ENCODE measurements at regions of chr21 and their contacts with region 1.

Region 1: GRCh38 chr21:39004634-39005501 is 178.4 kb downstream of the PSMG1 start:
- DNase-seq: no peak
- H3K4me3 ChIP-seq: no peak overlapping the region
- H3K27ac ChIP-seq: no peak overlapping the region
- H3K4me1 ChIP-seq: peaks cover 10% of the 10 kb centered on the region
- H3K27me3 ChIP-seq: no peaks in the 10 kb centered on the region
- CTCF ChIP-seq: no peak

Region 2: DNA sequence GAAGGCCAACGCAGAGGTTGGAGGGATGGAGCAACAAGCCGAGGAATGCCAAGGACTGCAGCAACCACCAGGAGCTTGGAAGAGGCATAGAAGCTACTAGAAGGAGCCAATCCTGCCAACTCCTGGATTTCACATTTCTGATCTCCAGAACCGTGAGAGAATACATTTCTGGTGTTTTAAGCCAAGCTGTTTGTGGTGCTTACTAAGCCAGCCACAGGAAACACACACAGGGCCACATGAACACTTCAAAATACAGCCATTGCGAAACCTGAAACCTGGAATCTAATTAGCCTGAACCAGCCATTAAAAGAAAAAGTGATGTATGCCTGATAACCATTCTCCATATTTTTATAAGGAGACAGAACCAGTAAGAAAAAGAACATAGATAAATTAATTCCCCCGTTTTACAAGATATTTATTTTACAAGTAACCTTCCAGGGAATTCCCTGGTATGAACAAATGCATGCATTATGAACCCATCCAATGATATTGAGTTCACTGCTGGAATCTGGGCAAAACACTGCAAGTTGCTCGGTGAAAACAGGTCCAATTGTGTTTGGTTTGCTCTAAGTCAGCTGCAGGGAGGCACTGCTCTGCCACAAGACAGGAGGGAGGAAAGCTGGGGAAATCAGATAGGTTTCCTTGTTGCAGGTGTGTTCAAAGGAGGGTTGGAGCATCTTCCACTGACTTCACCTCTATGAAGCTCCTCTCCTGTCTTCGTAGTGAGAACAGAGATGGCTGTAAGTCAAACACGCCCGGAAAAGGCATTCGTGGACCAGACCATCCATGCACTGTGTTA is 129.0 kb before region 1 on chr21:
- CTCF ChIA-PET with region 1: no interaction called
- dilution Hi-C with region 1: no loop called
- in situ Hi-C with region 1: no loop called
- intact Hi-C with region 1: no loop called
- DNase-seq: peak; percentile 72
- H3K4me3 ChIP-seq: no peak overlapping the region
- H3K27ac ChIP-seq: no peak overlapping the region
- H3K4me1 ChIP-seq: peaks cover 4% of the 10 kb centered on the region
- H3K27me3 ChIP-seq: no peaks in the 10 kb centered on the region
- CTCF ChIP-seq: no peak

Region 3: DNA sequence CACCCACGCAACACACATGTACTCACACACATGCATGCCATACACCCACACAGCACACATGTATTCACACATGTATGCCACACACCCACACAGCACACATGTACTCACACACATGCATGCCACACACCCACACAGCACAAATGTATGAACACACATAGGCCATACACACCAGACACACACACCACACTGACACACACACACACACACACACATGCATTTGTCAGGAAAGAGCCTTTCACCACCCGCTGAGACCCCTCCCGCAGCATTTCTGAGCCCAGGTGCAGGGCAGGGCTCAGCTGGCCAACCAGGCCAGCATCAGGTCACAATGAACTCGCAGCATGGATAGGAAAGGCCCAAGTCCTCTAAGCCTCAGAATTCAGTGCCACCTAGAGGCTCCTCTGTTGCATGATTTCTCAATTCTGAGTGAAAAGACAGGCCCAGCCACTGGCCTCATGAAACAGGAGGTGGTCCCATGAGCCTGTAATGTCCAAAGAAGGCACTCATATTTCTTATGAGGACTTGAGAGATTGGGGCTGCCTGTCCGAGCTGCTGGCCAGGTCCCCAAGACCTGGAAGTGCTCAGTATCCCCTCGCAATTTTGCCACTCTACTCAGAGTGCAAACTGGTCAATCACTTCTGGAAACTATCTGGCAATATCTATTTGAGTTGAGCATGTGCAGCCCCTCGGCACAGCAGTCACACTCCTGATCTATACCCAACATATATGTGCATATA is 121.1 kb after region 1 on chr21:
- CTCF ChIA-PET with region 1: no interaction called
- dilution Hi-C with region 1: no loop called
- in situ Hi-C with region 1: no loop called
- intact Hi-C with region 1: loop called (anchors 5 kb)
- DNase-seq: peak; percentile 62
- H3K4me3 ChIP-seq: no peak overlapping the region
- H3K27ac ChIP-seq: no peak overlapping the region
- H3K4me1 ChIP-seq: no peaks in the 10 kb centered on the region
- H3K27me3 ChIP-seq: no peaks in the 10 kb centered on the region
- CTCF ChIP-seq: peak; percentile 54 to 79